Natural killer cell (primary cell): ENCODE measurements at regions of chr11 and their contacts with region 1.

Region 1: GRCh38 chr11:75706260-75706729 is 11.3 kb upstream of the MOGAT2 start:
- DNase-seq: peak; percentile 53 to 84
- ATAC-seq: peak; percentile 86 to 98 (median 91)
- H3K4me3 ChIP-seq: no peak overlapping the region
- H3K4me3 Mint-ChIP-seq: no peak overlapping the region
- H3K27ac ChIP-seq: no peak overlapping the region
- H3K27ac Mint-ChIP-seq: no peak overlapping the region
- H3K4me1 ChIP-seq: peaks cover 6% of the 10 kb centered on the region
- H3K4me1 Mint-ChIP-seq: peaks cover 6 to 13% of the 10 kb centered on the region in 2 donors
- H3K27me3 ChIP-seq: no peaks in the 10 kb centered on the region
- H3K27me3 Mint-ChIP-seq: peaks cover 7% of the 10 kb centered on the region in 2 donors
- CTCF ChIP-seq: peak; percentile 97

Region 2: DNA sequence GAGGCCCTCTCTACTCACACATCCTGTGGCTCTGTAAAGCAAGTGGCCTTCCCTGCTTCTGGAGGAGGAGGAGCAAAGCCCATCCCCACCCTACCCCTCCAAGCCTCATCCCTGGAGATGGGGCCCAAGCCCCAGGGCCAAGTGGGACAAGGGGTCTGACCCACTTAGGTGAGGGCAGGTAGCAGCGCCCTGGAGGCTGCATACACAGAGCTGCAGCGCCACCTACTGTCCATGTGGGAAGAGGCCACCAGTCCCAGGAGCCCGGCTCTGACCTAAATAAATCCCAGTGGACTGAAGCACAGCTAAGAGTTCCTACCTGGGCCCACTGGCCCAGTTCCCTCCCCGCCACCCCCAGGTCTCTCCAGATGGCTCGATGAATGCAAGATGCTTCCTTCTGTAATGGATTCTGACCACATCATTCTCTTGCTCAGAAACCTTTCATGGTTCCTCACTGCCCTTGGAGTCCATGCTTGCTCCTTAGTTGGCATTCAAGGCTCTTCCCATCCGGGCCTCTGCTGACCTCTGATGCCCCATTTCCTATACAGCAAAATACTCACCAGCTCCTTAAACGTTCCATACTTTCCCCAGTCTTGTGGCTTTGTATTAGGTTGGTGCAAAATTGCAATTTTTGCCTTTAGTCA is 612.6 kb after region 1 on chr11:
- intact Hi-C with region 1: loop called (anchors 2 kb)
- DNase-seq: peak; percentile 75 to 94
- ATAC-seq: peak; percentile 87 to 98 (median 95)
- H3K4me3 ChIP-seq: no peak overlapping the region
- H3K4me3 Mint-ChIP-seq: no peak overlapping the region
- H3K27ac ChIP-seq: no peak overlapping the region
- H3K27ac Mint-ChIP-seq: no peak overlapping the region
- H3K4me1 ChIP-seq: no peaks in the 10 kb centered on the region
- H3K4me1 Mint-ChIP-seq: no peaks in the 10 kb centered on the region
- H3K27me3 ChIP-seq: no peaks in the 10 kb centered on the region
- H3K27me3 Mint-ChIP-seq: peaks cover 31 to 35% of the 10 kb centered on the region in 2 donors
- CTCF ChIP-seq: peak; percentile 84